ENCODE measurements at regions of chr18 and their contacts with region 1.

Region 1: GRCh38 chr18:75209129-75209950 is at the start of gene PTGR3:
- DNase-seq: peak; percentile 90
- ATAC-seq: peak; percentile 79
- total RNA-seq, gene PTGR3: 71.5 TPM

Region 2: GRCh38 chr18:74652392-74652988 is 556.9 kb before region 1 on chr18:
- intact Hi-C with region 1: loop called (anchors 10 kb)
- DNase-seq: no peak
- ATAC-seq: no peak

Region 3: DNA sequence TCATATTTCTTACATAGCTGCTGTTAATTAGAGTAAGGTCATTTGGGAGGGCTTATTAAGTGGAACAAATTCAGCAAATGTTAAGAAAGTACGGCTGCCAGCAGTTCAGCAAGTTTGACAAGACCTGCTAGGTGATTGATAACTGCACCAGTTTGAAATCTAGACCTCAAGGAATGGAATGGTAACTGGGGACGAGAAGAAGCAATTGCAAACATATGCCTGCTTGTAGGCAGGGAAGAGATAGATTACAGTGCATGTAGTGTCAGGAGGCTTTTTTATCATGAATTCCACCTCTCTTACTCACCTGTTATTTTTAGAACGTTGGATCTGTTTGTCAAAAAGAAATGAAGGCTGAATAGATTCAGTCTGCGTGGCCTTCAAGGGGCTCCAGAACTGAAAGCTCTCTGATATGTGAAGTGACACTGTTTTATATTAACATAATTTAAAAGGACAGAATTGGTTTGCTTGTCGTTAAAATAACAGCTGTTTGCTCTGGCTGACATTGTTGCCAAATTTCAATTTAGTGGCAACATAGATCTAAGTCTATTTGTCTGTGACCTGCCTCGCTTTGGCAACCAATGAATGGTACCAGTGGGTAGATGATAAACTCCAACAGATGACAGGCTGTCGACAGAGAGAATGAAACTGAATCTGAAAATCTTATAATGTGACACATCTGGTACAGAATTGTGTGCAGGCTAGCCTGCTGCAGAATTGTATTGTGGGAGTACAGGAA is 412.3 kb before region 1 on chr18:
- intact Hi-C with region 1: no loop called
- DNase-seq: no peak
- ATAC-seq: peak; percentile 84

Region 4: GRCh38 chr18:74896390-74896991 is 312.8 kb before region 1 on chr18:
- intact Hi-C with region 1: loop called (anchors 10 kb)
- DNase-seq: no peak
- ATAC-seq: peak; percentile 52

Region 5: GRCh38 chr18:75161256-75162028 is 47.9 kb before region 1 on chr18:
- intact Hi-C with region 1: loop called (anchors 5 kb)
- DNase-seq: no peak
- ATAC-seq: peak; percentile 54

Region 6: DNA sequence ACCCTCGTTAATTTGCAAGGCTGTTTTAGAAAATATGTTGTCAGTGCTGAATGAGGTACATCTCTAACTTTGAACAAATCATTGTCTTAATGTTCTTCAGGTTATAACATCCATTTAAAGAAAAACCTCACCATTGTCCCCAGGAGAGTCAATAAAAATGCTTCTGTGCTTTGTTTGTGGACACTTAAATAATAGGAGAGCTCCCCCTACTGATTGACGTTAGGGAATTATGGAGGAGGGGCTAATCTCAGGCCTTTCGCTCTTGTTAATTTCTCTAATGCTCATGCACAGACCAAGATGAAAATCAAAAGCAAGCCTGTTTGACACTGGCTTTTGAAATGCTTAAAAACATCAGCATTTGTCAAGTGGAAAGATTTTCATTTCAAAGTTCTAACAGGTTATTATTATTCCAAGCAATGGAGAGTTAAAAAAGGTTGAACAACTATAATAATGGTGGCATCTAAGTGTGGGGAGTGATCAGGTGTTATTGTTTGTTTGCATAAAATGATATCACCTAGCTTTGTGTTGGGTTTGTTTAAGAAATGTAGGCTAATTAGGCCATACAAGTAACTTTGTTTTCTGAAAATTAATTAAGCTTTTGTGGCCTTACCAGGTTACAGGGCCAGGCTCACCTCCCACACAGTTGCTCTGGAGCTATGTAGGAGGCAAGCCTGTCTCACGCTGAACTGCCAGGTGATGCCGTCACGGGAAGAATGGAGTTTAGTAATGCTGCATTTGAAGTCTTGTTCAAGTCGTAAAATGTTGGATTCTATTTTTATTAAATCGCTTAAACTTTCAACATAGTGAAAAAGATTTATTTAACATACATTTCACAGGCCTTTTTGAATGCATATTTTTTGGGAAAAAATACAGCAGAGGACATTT is 269.9 kb after region 1 on chr18:
- intact Hi-C with region 1: loop called (anchors 5 kb)
- DNase-seq: no peak
- ATAC-seq: peak; percentile 68